ENCODE measurements at regions of chr4 and their contacts with region 1.

Region 1: GRCh38 chr4:47933840-47934239 is 19.5 kb upstream of the NFXL1 start:
- DNase-seq: no peak
- ATAC-seq: peak; percentile 42; the same call in 1 of the 2 replicates
- H3K4me3 ChIP-seq: no peak overlapping the region
- H3K27ac ChIP-seq: no peak overlapping the region
- H3K4me1 ChIP-seq: no peaks in the 10 kb centered on the region; a peak in 1 of 4 replicates
- H3K27me3 ChIP-seq: no peaks in the 10 kb centered on the region
- CTCF ChIP-seq: peak; percentile 49 to 72 (median 61); a peak in 5 of 6 replicates
- POLR2A ChIP-seq: no peak
- RAD21 ChIP-seq: peak; percentile 75

Region 2: DNA sequence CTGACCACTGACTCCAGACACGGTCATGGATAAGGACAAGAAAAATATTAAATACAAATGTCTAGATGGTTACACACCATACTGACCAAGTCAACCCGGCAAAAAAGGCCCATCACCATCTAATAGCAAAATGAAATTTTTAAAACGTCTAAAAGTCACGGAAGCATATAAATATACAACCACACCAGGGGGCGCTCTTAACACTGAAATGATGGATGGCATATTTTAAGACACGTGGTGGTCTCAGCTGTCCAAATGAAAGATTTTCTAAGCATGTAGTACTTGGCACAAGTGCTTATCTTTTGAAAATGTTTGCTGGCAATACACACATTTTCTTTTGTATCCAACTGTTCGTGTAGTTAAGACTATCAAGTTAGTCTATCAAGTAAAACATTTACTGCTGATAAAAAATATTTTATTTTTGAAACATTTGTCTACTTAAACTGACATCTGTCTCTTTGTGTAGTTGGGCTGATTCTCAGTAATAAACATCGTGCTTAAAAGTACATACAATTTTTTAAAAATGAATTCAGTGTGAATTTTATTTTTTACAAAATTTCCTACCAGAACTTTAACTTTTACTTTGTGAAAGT is 1089.4 kb before region 1 on chr4:
- CTCF ChIA-PET with region 1: no interaction called
- POLR2A ChIA-PET with region 1: no interaction called
- RAD21 ChIA-PET with region 1: no interaction called
- intact Hi-C with region 1: loop called (anchors 5 kb)
- DNase-seq: peak; percentile 27
- ATAC-seq: no peak
- H3K4me3 ChIP-seq: no peak overlapping the region
- H3K27ac ChIP-seq: no peak overlapping the region
- H3K4me1 ChIP-seq: no peaks in the 10 kb centered on the region
- H3K27me3 ChIP-seq: no peaks in the 10 kb centered on the region
- CTCF ChIP-seq: peak; percentile 25 to 69 (median 54); a peak in 4 of 6 replicates
- POLR2A ChIP-seq: no peak
- RAD21 ChIP-seq: peak; percentile 39; the same call in 1 of the 2 replicates

Region 3: DNA sequence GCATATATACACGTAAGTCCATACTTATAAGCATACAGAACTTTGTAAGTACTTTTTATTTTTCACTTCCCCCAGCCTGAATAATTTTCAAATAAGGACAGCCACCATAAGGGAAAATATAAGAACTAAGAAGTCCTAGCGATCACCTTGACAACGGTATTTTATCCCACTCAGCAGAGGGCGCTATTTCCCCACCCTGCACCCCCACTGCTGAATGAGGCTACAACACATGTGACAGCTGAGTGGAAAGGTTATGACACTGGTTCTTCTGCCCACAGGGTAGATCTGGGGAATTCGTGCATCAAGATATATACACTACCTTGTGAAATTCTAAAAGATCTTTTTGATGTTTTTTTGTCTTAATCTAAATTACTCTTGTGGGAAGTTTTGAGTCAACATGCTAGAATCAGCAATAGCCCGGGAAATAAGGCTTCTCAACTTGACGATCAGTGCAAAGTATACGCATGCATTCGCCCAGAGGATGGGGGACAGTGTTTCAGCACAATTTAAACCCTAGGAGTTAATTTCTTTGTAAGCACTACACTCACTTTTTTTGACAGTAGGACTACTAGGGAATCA is 247.5 kb before region 1 on chr4:
- CTCF ChIA-PET with region 1: interaction called, 3 read pairs
- POLR2A ChIA-PET with region 1: no interaction called
- RAD21 ChIA-PET with region 1: no interaction called
- intact Hi-C with region 1: loop called (anchors 5 kb)
- DNase-seq: peak; percentile 43
- ATAC-seq: peak; percentile 91
- H3K4me3 ChIP-seq: no peak overlapping the region
- H3K27ac ChIP-seq: no peak overlapping the region
- H3K4me1 ChIP-seq: no peaks in the 10 kb centered on the region
- H3K27me3 ChIP-seq: no peaks in the 10 kb centered on the region
- CTCF ChIP-seq: peak; percentile 60 to 97 (median 85)
- POLR2A ChIP-seq: no peak
- RAD21 ChIP-seq: peak; percentile 68

Region 4: GRCh38 chr4:47704693-47705325 is 229.0 kb before region 1 on chr4:
- CTCF ChIA-PET with region 1: interaction called, 7 read pairs
- POLR2A ChIA-PET with region 1: no interaction called
- RAD21 ChIA-PET with region 1: no interaction called
- intact Hi-C with region 1: loop called (anchors 5 kb)
- DNase-seq: no peak
- ATAC-seq: peak; percentile 93
- H3K4me3 ChIP-seq: no peak overlapping the region
- H3K27ac ChIP-seq: no peak overlapping the region
- H3K4me1 ChIP-seq: no peaks in the 10 kb centered on the region
- H3K27me3 ChIP-seq: no peaks in the 10 kb centered on the region
- CTCF ChIP-seq: peak; percentile 22 to 47 (median 40); a peak in 4 of 6 replicates
- POLR2A ChIP-seq: no peak
- RAD21 ChIP-seq: peak; percentile 55

Measured in HCT116 (cell line).